ENCODE measurements at regions of chr10 and their contacts with region 1.

Region 1: GRCh38 chr10:25226775-25227682 is 52.2 kb downstream of the GPR158 start:
- DNase-seq: peak; percentile 34
- H3K4me3 ChIP-seq: no peak overlapping the region
- H3K27ac ChIP-seq: no peak overlapping the region
- H3K4me1 ChIP-seq: no peaks in the 10 kb centered on the region
- CTCF ChIP-seq: peak; percentile 80

Region 2: DNA sequence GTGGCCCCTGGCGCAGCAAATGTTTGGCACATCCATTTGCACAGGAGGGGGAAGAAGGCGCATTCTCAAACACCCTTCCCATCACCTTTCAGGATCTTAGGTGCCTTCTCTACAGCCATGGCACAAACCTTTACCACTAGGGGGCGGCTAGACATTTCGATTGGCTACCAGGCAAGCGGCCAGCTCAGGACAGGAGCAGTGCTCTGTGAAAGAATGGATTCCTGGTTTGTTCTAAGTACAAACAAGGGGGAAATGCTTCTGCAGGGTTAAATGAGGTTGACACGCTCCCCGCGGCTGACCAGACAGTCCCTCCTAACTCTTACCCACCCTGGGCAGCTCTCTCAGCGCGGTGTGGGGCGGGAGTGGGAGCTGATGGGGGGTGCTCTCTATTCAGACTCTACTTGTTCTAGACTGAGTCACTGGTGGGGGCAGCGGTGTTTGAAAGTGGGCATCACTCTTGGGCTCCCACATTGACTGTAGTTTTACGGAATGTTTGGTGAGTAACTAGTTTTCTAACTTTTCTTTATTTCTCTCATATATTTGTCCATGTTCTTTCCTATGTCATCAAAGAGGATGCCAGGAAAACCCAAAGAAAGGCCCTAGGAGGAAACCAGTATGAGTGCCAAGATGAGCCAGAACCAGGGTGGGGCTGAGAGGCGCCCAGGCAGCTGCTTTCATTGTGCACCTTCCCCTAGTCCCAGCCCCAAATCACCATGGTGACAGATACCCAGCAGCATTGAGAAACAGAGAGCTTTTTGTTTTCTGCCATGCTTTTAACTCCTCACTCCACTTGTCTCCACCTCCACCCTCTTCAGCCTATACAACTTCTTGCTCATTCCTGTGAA is 113.6 kb before region 1 on chr10:
- CTCF ChIA-PET with region 1: no interaction called
- POLR2A ChIA-PET with region 1: no interaction called
- intact Hi-C with region 1: loop called (anchors 10 kb)
- DNase-seq: peak; percentile 55
- H3K4me3 ChIP-seq: no peak overlapping the region
- H3K27ac ChIP-seq: no peak overlapping the region
- H3K4me1 ChIP-seq: no peaks in the 10 kb centered on the region
- CTCF ChIP-seq: peak; percentile 78

Region 3: DNA sequence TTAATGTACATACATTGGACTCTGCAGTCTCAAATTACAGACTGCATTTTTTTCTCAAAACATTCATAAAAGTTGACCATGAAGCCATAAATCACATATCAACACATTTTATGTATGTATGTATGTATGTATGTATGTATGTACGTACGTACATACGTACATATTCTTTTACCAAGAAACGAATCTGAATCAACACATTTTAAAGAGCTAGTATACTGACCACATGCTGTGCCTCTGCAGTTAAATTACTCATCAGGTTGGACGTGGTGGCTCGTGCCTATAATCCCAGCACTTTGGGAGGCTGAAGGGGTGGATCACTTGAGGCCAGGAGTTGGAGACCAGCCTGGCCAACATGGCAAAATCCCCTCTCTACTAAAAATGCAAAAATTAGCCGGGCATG is 53.6 kb after region 1 on chr10:
- CTCF ChIA-PET with region 1: no interaction called
- POLR2A ChIA-PET with region 1: no interaction called
- intact Hi-C with region 1: no loop called
- DNase-seq: no peak
- H3K4me3 ChIP-seq: no peak overlapping the region
- H3K27ac ChIP-seq: no peak overlapping the region
- H3K4me1 ChIP-seq: no peaks in the 10 kb centered on the region
- CTCF ChIP-seq: no peak